PC-3 (cell line): ENCODE measurements at regions of chr12 and their contacts with region 1.

Region 1: DNA sequence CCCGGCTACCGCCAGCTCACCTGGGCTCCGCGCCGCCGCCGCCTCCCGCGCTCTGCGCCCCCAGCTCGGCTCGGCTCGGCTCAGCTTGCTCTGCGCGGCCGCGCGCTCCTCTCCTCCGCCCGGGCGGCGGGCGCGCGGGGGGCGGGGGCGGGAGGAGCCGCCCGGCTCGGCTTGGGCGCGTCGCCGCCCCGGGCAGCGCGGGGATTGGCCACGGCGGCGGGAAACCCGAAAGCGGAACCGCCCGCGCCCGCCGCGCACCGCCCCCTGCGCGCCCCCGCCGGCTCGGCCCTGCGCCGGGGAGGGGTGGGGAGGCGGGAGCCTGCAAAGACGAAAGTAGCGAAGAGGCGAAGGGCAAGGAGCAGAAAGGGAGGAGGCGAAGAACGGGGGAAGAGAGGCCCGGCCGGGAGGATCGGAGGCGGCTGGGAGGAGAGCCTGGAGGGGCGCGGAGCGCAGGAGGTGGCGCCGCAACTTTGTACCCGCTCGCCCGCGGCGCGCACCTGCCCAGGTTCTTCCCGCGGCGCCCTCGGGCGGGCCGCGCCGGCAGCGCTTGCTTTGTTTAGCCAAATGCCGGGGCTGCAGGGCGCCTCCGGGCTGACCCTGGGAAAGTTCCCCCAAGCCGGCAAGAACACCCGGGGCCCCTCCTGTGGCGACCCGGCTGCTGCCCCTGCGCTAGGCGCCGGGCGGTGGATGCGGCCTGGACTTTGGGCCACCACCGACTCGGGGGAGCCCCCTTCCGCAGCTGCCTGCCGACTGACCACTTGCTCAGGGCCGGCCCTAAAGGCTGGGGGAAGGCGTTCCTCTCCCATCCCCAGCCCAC is at the start of gene CAMKK2:
- DNase-seq: peak; percentile 91
- ATAC-seq: peak; percentile 75
- H3K4me3 ChIP-seq: peak within 1 kb of the TSS; percentile 77
- H3K27ac ChIP-seq: peak within 1 kb of the TSS; percentile 21; the same call in 1 of the 2 replicates
- H3K4me1 ChIP-seq: peaks cover 12% of the 10 kb centered on the region
- H3K27me3 ChIP-seq: no peaks in the 10 kb centered on the region
- CTCF ChIP-seq: peak; percentile 43
- total RNA-seq, gene CAMKK2: 20.1 and 26.5 TPM in 2 replicates

Region 2: DNA sequence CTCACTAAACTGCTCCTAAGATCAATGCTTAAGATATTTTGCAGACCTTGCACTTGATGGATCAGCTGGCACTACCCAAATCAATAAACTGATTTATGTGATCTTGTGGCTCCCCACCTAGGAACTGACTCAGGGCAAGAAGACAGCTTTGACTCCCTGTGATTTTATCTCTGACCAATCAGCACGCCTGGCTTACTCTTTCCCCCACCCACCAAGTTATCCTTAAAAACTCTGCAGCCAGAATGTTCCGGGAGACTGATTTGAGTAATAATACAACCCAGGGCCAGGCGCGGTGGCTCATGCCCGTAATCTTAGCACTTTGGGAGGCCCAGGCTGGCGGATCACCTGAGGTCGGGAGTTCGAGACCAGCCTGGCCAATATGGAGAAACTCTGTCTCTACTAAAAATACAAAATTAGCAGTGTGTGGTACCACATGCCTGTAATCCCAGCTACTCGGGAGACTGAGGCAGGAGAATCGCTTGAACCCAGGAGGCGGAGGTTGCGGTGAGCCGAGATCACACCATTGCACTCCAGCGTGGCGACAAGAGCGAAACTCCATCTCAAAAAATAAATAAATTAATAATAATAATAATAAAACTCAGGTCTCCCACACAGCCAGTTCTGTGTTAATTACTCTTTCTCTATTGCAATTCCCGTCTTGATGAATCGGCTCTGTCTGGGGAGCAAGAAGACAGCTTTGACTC is 360.6 kb after region 1 on chr12:
- CTCF ChIA-PET with region 1: no interaction called
- POLR2A ChIA-PET with region 1: interaction called, 14 read pairs
- intact Hi-C with region 1: no loop called
- DNase-seq: peak; percentile 12
- ATAC-seq: no peak
- H3K4me3 ChIP-seq: no peak overlapping the region
- H3K27ac ChIP-seq: no peak overlapping the region
- H3K4me1 ChIP-seq: no peaks in the 10 kb centered on the region
- H3K27me3 ChIP-seq: no peaks in the 10 kb centered on the region
- CTCF ChIP-seq: no peak